Heart left ventricle (tissue), 16 donors: ENCODE measurements at regions of chr10 and their contacts with region 1.

Region 1: GRCh38 chr10:95363303-95363912 is 72.6 kb upstream of the PDLIM1 start:
- DNase-seq: peak in 1 of 5 donors; percentile 38
- ATAC-seq: peak in 2 of 4 donors; percentile 26 to 41
- H3K4me3 ChIP-seq: no peak overlapping the region
- H3K27ac ChIP-seq: peak overlapping the region in 3 of 12 donors; percentile 3 to 70 (median 7)
- H3K4me1 ChIP-seq: peaks cover 5 to 51% (median 23%) of the 10 kb centered on the region in 12 donors
- H3K27me3 ChIP-seq: no peaks in the 10 kb centered on the region
- CTCF ChIP-seq: peak; percentile 85 to 95 (median 91)
- POLR2A ChIP-seq: no peak

Region 2: GRCh38 chr10:95133016-95133752 is 230.2 kb before region 1 on chr10:
- intact Hi-C with region 1: loop called in 3 of 10 experiments (anchors 5 kb)
- DNase-seq: peak; percentile 49 to 65 (median 55)
- ATAC-seq: peak; percentile 42 to 76 (median 56)
- H3K4me3 ChIP-seq: no peak overlapping the region
- H3K27ac ChIP-seq: no peak overlapping the region
- H3K4me1 ChIP-seq: no peaks in the 10 kb centered on the region
- H3K27me3 ChIP-seq: no peaks in the 10 kb centered on the region
- CTCF ChIP-seq: peak; percentile 39 to 70 (median 60)
- POLR2A ChIP-seq: no peak

Region 3: GRCh38 chr10:95183271-95184230 is 179.9 kb before region 1 on chr10:
- intact Hi-C with region 1: loop called in 3 of 10 experiments (anchors 5 to 10 kb)
- DNase-seq: peak; percentile 83 to 93 (median 86)
- ATAC-seq: peak; percentile 91 to 99 (median 98)
- H3K4me3 ChIP-seq: peak overlapping the region; percentile 52 to 83 (median 73)
- H3K27ac ChIP-seq: peak overlapping the region in 11 of 12 donors; percentile 53 to 85 (median 79)
- H3K4me1 ChIP-seq: peaks cover 0 to 11% (median 0%) of the 10 kb centered on the region in 12 donors
- H3K27me3 ChIP-seq: no peaks in the 10 kb centered on the region
- CTCF ChIP-seq: peak; percentile 94 to 100 (median 97)
- POLR2A ChIP-seq: peak in 1 of 2 donors; percentile 65